PC-3 (cell line): ENCODE measurements at regions of chr14 and their contacts with region 1.

Region 1: DNA sequence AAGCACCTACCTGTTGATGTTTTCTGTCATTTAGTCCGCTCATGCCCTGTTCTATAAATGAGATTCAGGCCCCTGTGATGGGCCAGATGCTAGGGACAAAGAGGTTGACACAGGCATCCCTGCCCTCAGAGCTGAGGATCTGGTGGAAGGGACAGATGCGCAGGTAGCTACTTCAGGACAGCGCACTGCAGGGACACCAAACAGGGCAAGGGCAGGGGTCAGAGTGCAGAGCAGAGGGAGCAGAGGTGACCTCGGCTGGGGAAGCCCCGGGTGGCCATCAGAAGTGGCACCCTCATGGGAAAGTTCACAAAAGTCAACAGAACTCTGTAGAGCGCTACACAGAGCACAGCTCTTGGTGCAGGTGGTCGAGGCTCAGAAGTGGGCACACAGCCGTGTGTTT is 5.6 kb upstream of the PNMA1 start:
- DNase-seq: peak; percentile 0
- ATAC-seq: no peak
- H3K4me3 ChIP-seq: no peak overlapping the region
- H3K27ac ChIP-seq: no peak overlapping the region
- H3K4me1 ChIP-seq: peaks cover 27% of the 10 kb centered on the region
- H3K27me3 ChIP-seq: no peaks in the 10 kb centered on the region
- CTCF ChIP-seq: no peak

Region 2: DNA sequence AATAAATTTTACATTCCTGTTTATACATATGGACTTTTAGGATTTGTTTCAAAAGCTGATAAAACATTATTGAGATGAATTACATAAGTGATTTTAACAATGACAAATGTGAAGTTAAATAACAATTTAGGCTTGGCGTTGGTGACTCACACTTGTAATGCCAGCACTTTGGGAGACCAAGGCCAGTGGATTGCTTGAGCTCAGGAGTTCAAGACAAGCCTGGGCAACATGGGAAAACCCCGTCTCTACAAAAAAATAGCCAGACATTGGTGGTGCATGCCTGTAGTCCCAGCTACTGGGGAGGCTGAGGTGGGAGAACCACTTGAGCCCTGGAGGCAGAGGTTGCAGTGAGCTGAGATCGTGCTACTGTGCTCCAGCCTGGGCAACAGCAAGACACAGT is 143.4 kb before region 1 on chr14:
- CTCF ChIA-PET with region 1: no interaction called
- POLR2A ChIA-PET with region 1: no interaction called
- intact Hi-C with region 1: no loop called
- DNase-seq: peak; percentile 37
- ATAC-seq: peak; percentile 51
- H3K4me3 ChIP-seq: no peak overlapping the region
- H3K27ac ChIP-seq: no peak overlapping the region
- H3K4me1 ChIP-seq: peaks cover 5% of the 10 kb centered on the region; the same call in 1 of the 2 replicates
- H3K27me3 ChIP-seq: no peaks in the 10 kb centered on the region
- CTCF ChIP-seq: no peak

Region 3: DNA sequence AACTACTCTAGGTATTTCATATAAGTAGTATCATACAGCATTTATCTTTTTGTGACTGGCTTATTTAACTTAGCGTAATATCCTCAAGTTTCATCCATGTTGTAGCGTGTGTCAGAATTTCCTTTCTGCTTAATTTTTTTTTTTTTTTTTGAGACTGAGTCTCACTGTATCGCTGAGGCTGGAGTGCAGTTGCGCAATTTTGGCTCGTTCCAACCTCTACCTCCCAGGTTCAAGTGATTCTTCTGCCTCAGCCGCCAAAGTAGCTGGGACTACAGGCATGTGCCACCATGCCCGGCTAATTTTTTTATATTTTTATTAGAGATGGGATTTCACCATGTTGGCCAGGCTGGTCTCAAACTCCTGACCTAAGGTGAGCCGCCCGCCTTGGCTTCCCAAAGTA is 34.5 kb before region 1 on chr14:
- CTCF ChIA-PET with region 1: no interaction called
- POLR2A ChIA-PET with region 1: no interaction called
- intact Hi-C with region 1: no loop called
- DNase-seq: no peak
- ATAC-seq: no peak
- H3K4me3 ChIP-seq: no peak overlapping the region
- H3K27ac ChIP-seq: no peak overlapping the region
- H3K4me1 ChIP-seq: peaks cover 8% of the 10 kb centered on the region
- H3K27me3 ChIP-seq: no peaks in the 10 kb centered on the region
- CTCF ChIP-seq: no peak

Region 4: GRCh38 chr14:73700325-73700724 is 19.5 kb before region 1 on chr14:
- CTCF ChIA-PET with region 1: no interaction called
- POLR2A ChIA-PET with region 1: no interaction called
- intact Hi-C with region 1: no loop called
- DNase-seq: no peak
- ATAC-seq: no peak
- H3K4me3 ChIP-seq: no peak overlapping the region
- H3K27ac ChIP-seq: no peak overlapping the region
- H3K4me1 ChIP-seq: peaks cover 27% of the 10 kb centered on the region
- H3K27me3 ChIP-seq: no peaks in the 10 kb centered on the region
- CTCF ChIP-seq: no peak

Region 5: GRCh38 chr14:73748858-73749357 is 29.1 kb after region 1 on chr14:
- CTCF ChIA-PET with region 1: interaction called, 11 read pairs
- POLR2A ChIA-PET with region 1: no interaction called
- intact Hi-C with region 1: no loop called
- DNase-seq: no peak
- ATAC-seq: no peak
- H3K4me3 ChIP-seq: no peak overlapping the region
- H3K27ac ChIP-seq: no peak overlapping the region
- H3K4me1 ChIP-seq: peaks cover 69% of the 10 kb centered on the region
- H3K27me3 ChIP-seq: no peaks in the 10 kb centered on the region
- CTCF ChIP-seq: no peak

Region 6: DNA sequence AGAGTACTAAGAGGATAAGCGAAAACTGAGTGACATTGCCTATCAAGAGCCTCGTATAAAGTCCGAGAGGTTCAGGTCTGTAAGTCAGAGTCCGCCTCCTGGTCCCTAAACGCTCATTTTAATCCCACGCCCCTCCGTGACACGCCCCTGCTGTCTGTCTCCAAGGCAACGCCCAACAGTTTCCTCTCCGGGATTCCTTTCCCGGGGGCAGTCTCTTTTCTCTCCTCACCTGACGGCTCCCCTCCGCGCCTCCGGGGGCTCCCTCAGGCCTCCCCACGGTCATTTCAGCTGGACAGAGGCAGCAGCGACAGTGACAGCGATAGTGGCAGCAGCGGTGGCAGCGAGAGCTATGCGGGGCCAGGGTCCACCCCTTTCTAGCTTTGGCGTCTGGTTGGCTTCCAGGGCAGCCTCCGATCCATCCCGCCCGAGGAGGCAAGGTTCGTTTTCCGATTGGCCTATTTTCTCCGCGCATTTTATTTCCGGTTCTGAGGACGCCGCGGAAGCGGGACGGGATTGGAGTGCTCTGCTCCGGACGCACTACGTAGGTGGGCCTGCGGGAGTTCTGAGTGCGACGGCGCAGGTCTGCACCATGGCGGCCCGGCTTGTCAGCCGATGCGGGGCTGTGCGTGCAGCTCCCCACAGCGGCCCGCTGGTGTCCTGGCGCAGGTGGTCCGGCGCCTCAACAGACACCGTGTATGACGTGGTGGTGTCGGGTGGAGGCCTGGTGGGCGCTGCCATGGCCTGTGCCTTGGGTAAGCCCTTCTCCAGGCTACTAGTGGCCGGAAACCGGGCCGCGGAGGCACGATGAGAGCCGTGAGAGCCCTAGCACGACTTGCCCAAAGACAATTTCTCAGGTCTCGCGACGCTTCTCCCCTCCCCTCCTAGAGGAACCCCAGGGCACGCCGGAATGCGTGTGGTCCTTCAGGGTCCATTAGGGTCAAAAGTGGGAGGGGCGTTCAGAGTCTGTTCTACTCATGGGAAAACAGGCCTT is 230.2 kb after region 1 on chr14 and contains the starts of genes COQ6 and FAM161B:
- CTCF ChIA-PET with region 1: no interaction called
- POLR2A ChIA-PET with region 1: no interaction called
- intact Hi-C with region 1: no loop called
- DNase-seq: peak; percentile 99
- ATAC-seq: peak; percentile 97
- H3K4me3 ChIP-seq: peak within 1 kb of the TSS; percentile 91
- H3K27ac ChIP-seq: peak within 1 kb of the TSS; percentile 70
- H3K4me1 ChIP-seq: no peaks in the 10 kb centered on the region
- H3K27me3 ChIP-seq: no peaks in the 10 kb centered on the region
- CTCF ChIP-seq: no peak
- total RNA-seq, gene COQ6: 33.2 and 40.3 TPM in 2 replicates
- total RNA-seq, gene FAM161B: 2.8 and 3.5 TPM in 2 replicates